Sigmoid colon (tissue), 7 donors: ENCODE measurements at regions of chr3 and their contacts with region 1.

Region 1: DNA sequence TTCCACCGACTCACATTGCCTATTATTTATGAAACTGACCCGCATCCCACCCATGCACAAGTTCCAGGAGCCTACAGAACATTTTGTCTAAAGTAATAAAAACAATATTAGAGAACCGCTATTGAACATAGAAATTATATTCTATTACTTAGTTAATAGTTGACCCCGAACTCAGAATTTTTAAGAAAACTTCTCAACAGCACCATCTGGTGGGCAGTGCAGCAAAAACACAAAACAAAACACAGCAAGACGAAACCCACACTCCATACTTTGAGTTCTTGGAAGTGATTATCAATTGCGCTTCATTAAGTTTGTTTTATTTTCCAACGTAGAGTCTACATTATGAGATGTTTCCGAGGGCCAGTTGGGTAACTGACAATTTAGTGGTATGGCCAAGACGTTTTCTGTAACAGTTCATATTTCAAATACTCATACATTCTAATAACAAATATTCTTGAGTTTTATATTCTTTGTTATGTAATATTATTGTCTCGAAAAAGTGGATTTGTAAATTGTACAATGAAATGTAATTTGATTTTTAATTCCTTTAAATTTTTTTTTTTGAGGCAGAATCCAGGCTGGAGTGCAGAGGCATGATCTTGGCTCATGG is 24.0 kb upstream of the C3orf70 start:
- DNase-seq: no peak
- H3K4me3 ChIP-seq: no peak overlapping the region
- H3K27ac ChIP-seq: no peak overlapping the region
- H3K4me1 ChIP-seq: peaks cover 0 to 14% (median 11%) of the 10 kb centered on the region in 4 donors
- H3K27me3 ChIP-seq: no peaks in the 10 kb centered on the region
- CTCF ChIP-seq: peak; percentile 64 to 70 (median 70)
- EP300 ChIP-seq: no peak
- POLR2A ChIP-seq: no peak

Region 2: GRCh38 chr3:184874709-184875644 is 301.9 kb before region 1 on chr3:
- intact Hi-C with region 1: loop called (anchors 10 kb)
- DNase-seq: no peak
- H3K4me3 ChIP-seq: no peak overlapping the region
- H3K27ac ChIP-seq: no peak overlapping the region
- H3K4me1 ChIP-seq: no peaks in the 10 kb centered on the region
- H3K27me3 ChIP-seq: no peaks in the 10 kb centered on the region
- CTCF ChIP-seq: peak in 3 of 4 experiments; percentile 9 to 46 (median 17)
- EP300 ChIP-seq: no peak
- POLR2A ChIP-seq: no peak

Region 3: DNA sequence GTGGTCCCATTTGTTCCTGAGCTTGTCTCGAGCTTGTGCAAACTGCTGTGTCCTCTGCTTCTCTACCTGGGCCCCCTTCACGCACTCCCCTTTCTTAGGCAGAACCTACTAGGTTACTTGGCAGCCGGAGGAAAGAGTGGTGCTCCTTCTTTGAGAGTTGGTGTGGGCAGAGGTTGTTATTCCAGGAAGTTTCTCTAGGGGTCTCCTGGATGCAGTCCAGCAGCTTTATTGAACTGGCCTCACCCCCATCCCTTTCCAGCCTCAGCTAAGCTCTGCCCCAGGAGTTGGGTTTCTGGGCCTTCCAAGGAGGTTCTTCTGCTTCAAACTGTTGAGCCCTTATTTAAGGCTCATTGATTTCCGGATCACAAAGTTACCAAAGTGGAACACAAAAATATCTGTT is 127.1 kb before region 1 on chr3:
- intact Hi-C with region 1: no loop called
- DNase-seq: no peak
- H3K4me3 ChIP-seq: no peak overlapping the region
- H3K27ac ChIP-seq: no peak overlapping the region
- H3K4me1 ChIP-seq: no peaks in the 10 kb centered on the region
- H3K27me3 ChIP-seq: no peaks in the 10 kb centered on the region
- CTCF ChIP-seq: no peak
- EP300 ChIP-seq: no peak
- POLR2A ChIP-seq: no peak

Region 4: DNA sequence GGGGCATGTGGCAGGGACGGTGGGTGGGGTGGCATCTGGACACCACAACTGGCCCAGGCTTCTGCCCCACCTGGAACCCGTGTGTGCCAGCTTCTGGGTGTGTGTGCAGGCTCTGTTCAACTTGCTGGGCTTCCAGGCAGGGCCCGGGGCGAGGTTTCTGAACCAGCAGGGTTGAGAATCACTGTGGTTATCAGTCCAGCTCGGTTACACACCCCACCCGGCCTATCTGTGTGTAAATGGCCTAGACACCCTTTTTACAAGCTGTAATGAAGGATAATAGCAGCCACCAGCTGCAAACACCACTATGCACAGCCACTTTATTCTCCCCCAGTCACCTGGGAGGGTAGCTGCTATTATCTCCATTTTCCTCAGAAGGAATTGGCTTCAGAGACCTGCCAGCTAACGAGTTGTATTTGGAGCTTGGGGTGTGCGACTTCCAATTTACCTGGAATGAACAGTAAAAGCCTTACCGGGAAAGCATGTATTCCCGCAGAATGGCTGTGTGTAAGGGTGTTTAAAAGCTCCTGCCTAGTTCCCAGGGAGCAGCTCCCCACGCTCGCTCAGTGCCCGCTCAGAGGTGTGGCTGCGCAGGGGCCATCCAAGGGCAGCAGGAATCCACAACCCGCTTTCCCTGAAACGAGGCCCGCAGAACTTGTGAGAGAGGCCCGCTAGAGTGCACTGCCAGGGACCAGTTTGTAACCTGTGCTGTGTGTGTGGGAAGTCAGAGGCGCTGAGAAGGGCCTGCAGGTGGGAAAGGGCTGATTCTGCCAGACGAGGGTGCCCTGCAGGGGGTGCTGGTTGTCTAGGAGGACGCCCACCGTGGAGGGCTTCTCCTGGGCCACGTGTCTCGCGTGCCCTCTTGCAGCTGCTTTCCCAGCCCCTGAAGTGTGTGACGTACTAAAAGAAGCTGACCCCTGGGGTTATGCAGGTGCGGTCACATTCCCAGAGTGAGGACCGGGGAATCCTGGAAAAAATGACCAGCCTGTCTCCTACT is 107.5 kb before region 1 on chr3:
- intact Hi-C with region 1: loop called (anchors 1 kb)
- DNase-seq: no peak
- H3K4me3 ChIP-seq: no peak overlapping the region
- H3K27ac ChIP-seq: no peak overlapping the region
- H3K4me1 ChIP-seq: no peaks in the 10 kb centered on the region
- H3K27me3 ChIP-seq: no peaks in the 10 kb centered on the region
- CTCF ChIP-seq: peak in 1 of 4 experiments; percentile 20
- EP300 ChIP-seq: no peak
- POLR2A ChIP-seq: no peak

Region 5: GRCh38 chr3:185152410-185153210 is 24.2 kb before region 1 on chr3 and contains the start of gene C3orf70:
- intact Hi-C with region 1: loop called (anchors 2 kb)
- DNase-seq: peak; percentile 85
- H3K4me3 ChIP-seq: peak within 1 kb of the TSS; percentile 71 to 90 (median 84)
- H3K27ac ChIP-seq: peak within 1 kb of the TSS; percentile 90 to 95 (median 94)
- H3K4me1 ChIP-seq: peaks cover 0 to 38% (median 27%) of the 10 kb centered on the region in 4 donors
- H3K27me3 ChIP-seq: no peaks in the 10 kb centered on the region
- CTCF ChIP-seq: no peak
- EP300 ChIP-seq: no peak
- POLR2A ChIP-seq: peak in 1 of 2 donors; percentile 20
- total RNA-seq, gene C3orf70: 26.0 to 52.3 (median 38.7) TPM